Adrenal gland (tissue), 19 donors: ENCODE measurements at regions of chr2 and their contacts with region 1.

Region 1: DNA sequence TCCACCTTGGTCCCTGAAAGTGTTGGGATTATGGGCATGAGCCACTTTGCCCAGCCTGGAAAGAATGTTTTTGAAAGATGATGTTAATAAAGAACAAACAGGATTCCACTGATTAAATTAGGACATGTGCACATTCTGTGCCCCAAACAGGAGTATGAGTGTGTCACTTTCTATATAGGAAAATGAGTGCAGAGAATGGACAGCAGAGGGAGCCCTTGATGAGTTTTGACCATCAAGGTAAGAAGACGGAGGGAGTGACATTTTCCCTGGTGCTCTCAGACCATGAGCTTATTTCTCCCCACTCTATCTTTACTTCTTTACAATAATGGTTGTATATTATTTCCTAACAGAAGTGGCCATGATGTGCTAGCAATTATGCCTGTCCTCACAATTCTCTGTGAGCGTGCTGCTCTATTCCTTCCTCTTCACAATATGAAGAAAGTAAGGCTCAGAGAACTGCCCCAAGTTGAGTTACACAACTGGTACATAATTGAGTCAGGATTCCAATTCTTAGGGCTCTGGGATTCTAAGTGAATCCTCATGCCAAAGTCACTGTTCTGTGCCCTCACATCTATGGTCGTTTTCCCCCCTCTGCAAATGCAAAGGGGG is 20.6 kb downstream of the RPL37A start:
- DNase-seq: peak; percentile 67 to 90 (median 79)
- H3K4me3 ChIP-seq: no peak overlapping the region
- H3K27ac ChIP-seq: no peak overlapping the region
- H3K4me1 ChIP-seq: no peaks in the 10 kb centered on the region
- H3K27me3 ChIP-seq: no peaks in the 10 kb centered on the region
- CTCF ChIP-seq: peak; percentile 58 to 91 (median 80)
- POLR2A ChIP-seq: no peak

Region 2: GRCh38 chr2:216619411-216620393 is 100.4 kb after region 1 on chr2:
- intact Hi-C with region 1: no loop called
- DNase-seq: no peak
- H3K4me3 ChIP-seq: no peak overlapping the region
- H3K27ac ChIP-seq: no peak overlapping the region
- H3K4me1 ChIP-seq: no peaks in the 10 kb centered on the region
- H3K27me3 ChIP-seq: no peaks in the 10 kb centered on the region
- CTCF ChIP-seq: no peak
- POLR2A ChIP-seq: no peak

Region 3: GRCh38 chr2:216666461-216667233 is 147.4 kb after region 1 on chr2:
- intact Hi-C with region 1: loop called (anchors 2 kb)
- DNase-seq: peak; percentile 44 to 90 (median 68)
- H3K4me3 ChIP-seq: no peak overlapping the region
- H3K27ac ChIP-seq: no peak overlapping the region
- H3K4me1 ChIP-seq: peaks cover 0 to 9% of the 10 kb centered on the region in 2 donors
- H3K27me3 ChIP-seq: no peaks in the 10 kb centered on the region
- CTCF ChIP-seq: peak; percentile 96 to 98 (median 98)
- POLR2A ChIP-seq: no peak